ENCODE measurements at regions of chr13 and their contacts with region 1.

Region 1: DNA sequence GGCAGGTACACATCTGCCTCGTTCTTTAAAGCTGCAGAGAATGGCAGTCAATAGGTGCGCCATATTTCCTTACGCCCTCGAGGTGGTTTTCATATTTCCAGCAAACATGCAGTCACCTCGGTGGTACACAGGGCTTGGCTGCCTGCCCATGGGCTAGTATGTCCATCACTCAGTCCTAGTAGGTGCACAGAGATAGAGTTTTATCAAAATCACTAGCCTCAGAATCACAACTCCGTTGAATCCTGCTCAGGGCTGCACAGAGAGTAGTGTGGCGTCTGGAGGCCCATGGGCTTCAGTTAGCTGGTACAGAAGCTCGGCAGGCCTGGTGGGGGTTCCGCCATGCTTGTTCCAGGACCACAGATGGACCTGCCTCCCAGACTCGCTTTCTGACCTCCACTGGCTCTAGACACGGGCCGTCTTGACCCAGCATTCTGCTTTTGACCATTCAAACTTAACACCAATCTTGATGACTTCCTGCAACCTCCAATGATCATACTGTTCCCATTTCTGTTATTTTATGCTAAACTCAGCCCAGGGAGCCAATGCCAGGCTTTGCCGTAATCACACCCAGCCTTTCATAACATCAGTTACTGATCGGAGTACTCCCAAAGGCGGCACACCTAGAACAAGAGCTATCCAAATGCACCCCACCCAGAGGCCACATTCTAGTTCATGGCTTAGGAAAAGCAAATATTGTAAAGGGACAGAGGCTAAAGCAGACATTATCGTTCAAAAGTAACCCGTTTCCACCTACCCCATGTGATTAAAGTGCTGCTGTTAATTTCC is 120.4 kb downstream of the RAB20 start:
- DNase-seq: no peak
- H3K4me3 ChIP-seq: no peak overlapping the region
- H3K27ac ChIP-seq: no peak overlapping the region
- H3K4me1 ChIP-seq: peaks cover 11% of the 10 kb centered on the region
- H3K27me3 ChIP-seq: no peaks in the 10 kb centered on the region
- CTCF ChIP-seq: no peak
- POLR2A ChIP-seq: no peak

Region 2: GRCh38 chr13:109998726-109999533 is 442.2 kb before region 1 on chr13:
- CTCF ChIA-PET with region 1: no interaction called
- POLR2A ChIA-PET with region 1: no interaction called
- dilution Hi-C with region 1: no loop called
- intact Hi-C with region 1: no loop called
- DNase-seq: no peak
- H3K4me3 ChIP-seq: no peak overlapping the region
- H3K27ac ChIP-seq: no peak overlapping the region
- H3K4me1 ChIP-seq: no peaks in the 10 kb centered on the region
- H3K27me3 ChIP-seq: no peaks in the 10 kb centered on the region
- CTCF ChIP-seq: no peak
- POLR2A ChIP-seq: no peak

Region 3: GRCh38 chr13:110218581-110219201 is 222.4 kb before region 1 on chr13:
- CTCF ChIA-PET with region 1: interaction called, 6 read pairs
- POLR2A ChIA-PET with region 1: no interaction called
- dilution Hi-C with region 1: no loop called
- intact Hi-C with region 1: loop called (anchors 1 kb)
- DNase-seq: no peak
- H3K4me3 ChIP-seq: no peak overlapping the region
- H3K27ac ChIP-seq: no peak overlapping the region
- H3K4me1 ChIP-seq: peaks cover 18% of the 10 kb centered on the region
- H3K27me3 ChIP-seq: no peaks in the 10 kb centered on the region
- CTCF ChIP-seq: no peak
- POLR2A ChIP-seq: no peak

Region 4: GRCh38 chr13:110283736-110284517 is 157.2 kb before region 1 on chr13:
- CTCF ChIA-PET with region 1: no interaction called
- POLR2A ChIA-PET with region 1: no interaction called
- dilution Hi-C with region 1: no loop called
- intact Hi-C with region 1: no loop called
- DNase-seq: no peak
- H3K4me3 ChIP-seq: no peak overlapping the region
- H3K27ac ChIP-seq: no peak overlapping the region
- H3K4me1 ChIP-seq: no peaks in the 10 kb centered on the region
- H3K27me3 ChIP-seq: no peaks in the 10 kb centered on the region
- CTCF ChIP-seq: no peak
- POLR2A ChIP-seq: no peak